Mucosa of descending colon (tissue), 3 donors: ENCODE measurements at regions of chr2 and their contacts with region 1.

Region 1: GRCh38 chr2:10135296-10136089 is 13.0 kb downstream of the RRM2 start:
- DNase-seq: peak in 1 of 3 donors; percentile 13
- ATAC-seq: peak; percentile 7
- H3K4me3 ChIP-seq: no peak overlapping the region
- H3K4me1 ChIP-seq: no peaks in the 10 kb centered on the region
- CTCF ChIP-seq: no peak

Region 2: GRCh38 chr2:10400568-10400977 is 265.1 kb after region 1 on chr2:
- intact Hi-C with region 1: no loop called
- DNase-seq: peak in 1 of 3 donors; percentile 41
- ATAC-seq: peak; percentile 1
- H3K4me3 ChIP-seq: no peak overlapping the region
- H3K4me1 ChIP-seq: peaks cover 18% of the 10 kb centered on the region
- CTCF ChIP-seq: no peak

Region 3: GRCh38 chr2:10412384-10412783 is 276.9 kb after region 1 on chr2:
- intact Hi-C with region 1: loop called in 1 of 2 experiments (anchors 10 kb)
- DNase-seq: peak in 1 of 3 donors; percentile 65
- ATAC-seq: peak; percentile 14
- H3K4me3 ChIP-seq: no peak overlapping the region
- H3K4me1 ChIP-seq: peaks cover 43% of the 10 kb centered on the region
- CTCF ChIP-seq: no peak